ENCODE measurements at regions of chr12 and their contacts with region 1.

Region 1: DNA sequence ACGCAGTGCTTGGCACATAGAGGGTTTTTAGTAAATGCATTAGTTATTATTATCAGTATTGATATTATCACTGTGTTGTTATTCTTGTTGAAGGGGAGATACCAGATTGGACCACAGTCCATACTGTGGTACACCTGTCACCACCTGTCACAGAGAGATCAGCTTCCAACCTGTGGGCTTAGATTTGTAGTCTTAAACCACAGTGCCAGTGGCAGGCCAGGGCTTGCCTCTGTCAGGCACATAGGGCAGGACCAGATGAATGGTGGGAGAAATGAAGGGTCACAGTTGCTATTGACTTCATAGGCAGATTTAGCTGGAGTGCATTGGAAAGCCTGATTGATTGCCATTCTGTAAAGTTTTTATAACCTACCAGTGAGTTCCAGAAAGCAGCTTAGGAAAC is 35.1 kb downstream of the ARL1 start:
- DNase-seq: no peak
- CTCF ChIP-seq: no peak

Region 2: DNA sequence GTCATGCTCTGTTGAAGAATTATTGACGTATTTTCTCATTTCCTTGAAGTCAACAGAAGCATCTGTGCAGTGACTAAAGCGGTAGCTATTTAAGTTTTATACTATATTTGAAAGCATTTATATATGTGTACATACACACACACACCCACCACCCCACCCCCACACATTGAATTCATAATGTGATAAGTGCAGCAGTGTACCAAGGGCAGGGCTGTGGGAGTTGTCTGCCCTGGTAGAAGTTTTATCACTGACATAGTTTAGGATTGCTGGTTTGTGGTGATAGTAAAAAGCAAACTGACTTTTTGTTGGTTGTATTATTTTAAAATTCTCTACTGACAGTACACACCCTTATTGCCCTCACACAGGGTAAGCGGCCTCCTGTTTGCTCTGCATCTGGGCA is 759.8 kb before region 1 on chr12:
- CTCF ChIA-PET with region 1: no interaction called
- POLR2A ChIA-PET with region 1: no interaction called
- DNase-seq: no peak
- CTCF ChIP-seq: no peak

Region 3: GRCh38 chr12:101361455-101361854 is 11.0 kb before region 1 on chr12:
- CTCF ChIA-PET with region 1: interaction called, 13 read pairs
- POLR2A ChIA-PET with region 1: no interaction called
- DNase-seq: no peak
- CTCF ChIP-seq: no peak

Region 4: GRCh38 chr12:101455685-101456084 is 83.3 kb after region 1 on chr12:
- CTCF ChIA-PET with region 1: no interaction called
- POLR2A ChIA-PET with region 1: no interaction called
- DNase-seq: no peak
- CTCF ChIP-seq: no peak